Right cardiac atrium (tissue), 5 donors: ENCODE measurements at regions of chr6 and their contacts with region 1.

Region 1: GRCh38 chr6:34392497-34393190 is at the start of gene NUDT3:
- DNase-seq: peak; percentile 95 to 98 (median 98)
- ATAC-seq: peak; percentile 94 to 96
- H3K4me3 ChIP-seq: peak within 1 kb of the TSS; percentile 71
- H3K27ac ChIP-seq: peak within 1 kb of the TSS; percentile 68
- H3K4me1 ChIP-seq: no peaks in the 10 kb centered on the region
- H3K27me3 ChIP-seq: no peaks in the 10 kb centered on the region
- total RNA-seq, gene NUDT3: 44.6 to 67.1 (median 51.9) TPM

Region 2: GRCh38 chr6:33950472-33950881 is 442.2 kb before region 1 on chr6:
- intact Hi-C with region 1: no loop called
- DNase-seq: no peak
- ATAC-seq: no peak
- H3K4me3 ChIP-seq: no peak overlapping the region
- H3K27ac ChIP-seq: no peak overlapping the region
- H3K4me1 ChIP-seq: no peaks in the 10 kb centered on the region
- H3K27me3 ChIP-seq: no peaks in the 10 kb centered on the region

Region 3: DNA sequence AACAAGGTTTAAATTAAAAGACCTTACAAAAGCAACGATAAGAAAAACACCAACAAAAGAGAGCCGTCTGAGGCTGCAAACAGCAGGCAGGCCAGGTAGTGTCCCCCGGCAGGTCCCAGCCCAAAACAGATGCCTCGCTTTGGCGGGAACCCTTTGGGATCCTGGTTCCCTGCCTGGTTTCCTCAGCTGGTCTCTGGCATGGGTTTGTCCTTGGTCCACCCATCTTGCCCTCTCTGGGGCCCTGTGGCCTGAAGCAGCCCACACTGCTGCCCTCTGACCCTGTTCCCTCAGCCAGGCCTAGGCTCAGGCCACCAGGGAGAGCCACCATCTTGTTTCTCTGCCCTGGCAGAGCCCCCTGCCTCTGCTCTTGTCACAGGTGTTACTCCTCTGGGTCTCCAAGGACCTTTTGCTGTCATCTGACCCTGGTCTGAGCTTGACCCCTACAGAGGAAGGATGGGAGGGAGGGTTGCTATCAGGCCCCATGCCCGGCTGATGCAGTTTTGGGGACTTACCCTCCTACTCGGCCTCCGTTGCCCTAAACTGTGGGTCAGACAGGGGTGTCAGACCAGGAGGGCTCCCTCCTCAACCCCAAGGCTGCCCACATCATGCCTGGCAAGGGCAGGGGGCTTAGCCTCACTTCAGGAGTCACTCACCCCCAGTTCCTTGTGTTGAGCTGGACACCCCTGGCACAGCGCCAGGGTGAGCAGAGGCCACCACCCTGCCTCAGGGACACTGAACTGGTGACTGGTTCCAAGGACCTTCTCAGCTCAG is 216.2 kb before region 1 on chr6:
- intact Hi-C with region 1: no loop called
- DNase-seq: no peak
- ATAC-seq: no peak
- H3K4me3 ChIP-seq: no peak overlapping the region
- H3K27ac ChIP-seq: no peak overlapping the region
- H3K4me1 ChIP-seq: no peaks in the 10 kb centered on the region
- H3K27me3 ChIP-seq: no peaks in the 10 kb centered on the region

Region 4: GRCh38 chr6:34248727-34249551 is 143.7 kb before region 1 on chr6 and contains the start of gene SMIM29:
- intact Hi-C with region 1: loop called in 3 of 4 experiments (anchors 2 to 5 kb)
- DNase-seq: peak; percentile 97 to 99 (median 98)
- ATAC-seq: peak; percentile 91 to 94
- H3K4me3 ChIP-seq: peak within 1 kb of the TSS; percentile 82
- H3K27ac ChIP-seq: peak within 1 kb of the TSS; percentile 96
- H3K4me1 ChIP-seq: peaks cover 2% of the 10 kb centered on the region
- H3K27me3 ChIP-seq: no peaks in the 10 kb centered on the region
- total RNA-seq, gene SMIM29: 17.0 to 25.5 (median 22.4) TPM

Region 5: GRCh38 chr6:34301408-34301807 is 91.2 kb before region 1 on chr6:
- intact Hi-C with region 1: loop called in 1 of 4 experiments (anchors 10 kb)
- DNase-seq: peak; percentile 70 to 87 (median 80)
- ATAC-seq: peak; percentile 94 to 96
- H3K4me3 ChIP-seq: no peak overlapping the region
- H3K27ac ChIP-seq: peak overlapping the region; percentile 77
- H3K4me1 ChIP-seq: peaks cover 10% of the 10 kb centered on the region
- H3K27me3 ChIP-seq: no peaks in the 10 kb centered on the region

Region 6: DNA sequence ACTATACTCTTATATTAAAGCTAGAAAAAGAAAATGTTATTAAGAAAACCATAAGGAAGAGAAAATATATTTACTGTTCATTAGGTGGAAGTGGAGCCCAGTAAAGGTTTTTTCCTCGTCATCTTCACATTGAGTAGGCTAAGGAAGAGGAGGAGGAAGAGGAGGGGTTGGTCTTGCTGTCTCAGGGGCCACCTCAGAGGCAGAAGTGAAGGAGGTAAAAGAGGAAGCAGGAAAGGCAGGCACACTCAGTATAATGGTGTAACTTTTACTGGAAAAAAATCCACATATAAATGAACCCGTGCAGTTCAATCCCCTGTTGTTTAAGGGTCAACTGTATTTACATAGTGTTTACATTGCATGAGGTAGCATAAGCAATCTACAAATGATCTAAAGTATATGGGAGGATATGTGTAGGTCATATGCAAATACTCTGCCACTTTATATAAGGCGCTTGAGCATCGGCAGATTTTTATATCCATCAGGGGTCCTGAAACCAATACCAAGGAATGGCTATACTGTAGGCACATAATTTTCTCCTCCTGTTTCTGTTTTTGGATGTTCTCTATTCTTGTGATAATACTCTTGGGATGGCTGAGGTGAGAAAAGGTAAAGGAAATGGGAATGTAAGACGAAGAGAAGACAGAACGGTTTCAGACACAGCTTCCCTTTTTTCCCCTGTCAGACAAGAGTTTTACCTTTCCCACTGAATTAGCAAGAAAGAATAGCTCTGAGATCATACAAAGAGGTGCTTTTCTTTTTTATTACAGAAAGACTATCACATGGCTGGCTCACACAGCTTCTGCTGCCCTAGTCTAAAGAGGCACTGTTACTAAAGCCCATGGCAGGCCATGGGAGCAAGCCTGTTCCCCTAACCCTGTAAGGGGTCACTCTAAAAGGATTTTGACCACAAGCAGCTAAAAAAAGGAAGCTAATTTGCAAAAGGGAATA is 60.1 kb before region 1 on chr6:
- intact Hi-C with region 1: loop called in 3 of 4 experiments (anchors 10 kb)
- DNase-seq: no peak
- ATAC-seq: no peak
- H3K4me3 ChIP-seq: no peak overlapping the region
- H3K27ac ChIP-seq: peak overlapping the region; percentile 64
- H3K4me1 ChIP-seq: peaks cover 6% of the 10 kb centered on the region
- H3K27me3 ChIP-seq: no peaks in the 10 kb centered on the region

Region 7: DNA sequence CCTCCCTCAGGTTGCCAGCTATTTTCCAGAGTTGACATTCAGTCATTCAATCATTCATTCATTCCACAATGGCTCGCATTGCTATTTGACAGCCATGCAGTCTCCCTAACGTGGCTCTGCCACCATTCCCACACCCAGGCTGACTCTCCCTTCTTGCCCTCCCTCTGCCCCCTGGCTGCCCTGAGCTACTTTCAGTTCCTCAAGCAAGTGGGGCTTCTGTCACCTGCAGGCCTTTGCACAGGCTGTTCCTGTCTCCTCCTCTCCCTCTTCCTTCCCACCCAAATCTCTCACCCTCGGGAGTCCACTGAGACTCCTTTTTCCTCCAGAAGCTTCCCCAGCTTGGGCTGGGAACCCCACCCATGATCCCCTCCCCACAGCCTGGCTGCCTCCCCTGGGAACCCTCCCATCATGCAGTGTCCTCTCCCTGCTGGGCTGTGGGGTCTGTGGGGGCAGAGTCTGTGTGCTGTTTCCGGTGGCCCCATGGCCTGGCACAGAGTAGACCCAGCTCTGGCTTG is 75.8 kb after region 1 on chr6:
- intact Hi-C with region 1: no loop called
- DNase-seq: peak in 1 of 3 donors; percentile 34
- ATAC-seq: no peak
- H3K4me3 ChIP-seq: no peak overlapping the region
- H3K27ac ChIP-seq: no peak overlapping the region
- H3K4me1 ChIP-seq: no peaks in the 10 kb centered on the region
- H3K27me3 ChIP-seq: no peaks in the 10 kb centered on the region